Caco-2 (cell line): ENCODE measurements at regions of chr3 and their contacts with region 1.

Region 1: GRCh38 chr3:195909644-195910508 is 1.5 kb upstream of the TNK2 start:
- DNase-seq: peak; percentile 86 to 88
- H3K4me3 ChIP-seq: peak overlapping the region; percentile 74
- H3K4me3 Mint-ChIP-seq: peak overlapping the region; percentile 86
- H3K27ac Mint-ChIP-seq: no peak overlapping the region
- H3K4me1 ChIP-seq: peaks cover 30% of the 10 kb centered on the region
- H3K4me1 Mint-ChIP-seq: peaks cover 30% of the 10 kb centered on the region
- H3K27me3 ChIP-seq: no peaks in the 10 kb centered on the region
- H3K27me3 Mint-ChIP-seq: no peaks in the 10 kb centered on the region
- CTCF ChIP-seq: no peak

Region 2: GRCh38 chr3:195863121-195864006 is 46.5 kb before region 1 on chr3:
- CTCF ChIA-PET with region 1: interaction called, 17 read pairs
- POLR2A ChIA-PET with region 1: interaction called, 3 read pairs
- intact Hi-C with region 1: loop called (anchors 1 kb)
- DNase-seq: peak; percentile 72 to 80
- H3K4me3 ChIP-seq: no peak overlapping the region
- H3K4me3 Mint-ChIP-seq: no peak overlapping the region
- H3K27ac Mint-ChIP-seq: no peak overlapping the region
- H3K4me1 ChIP-seq: no peaks in the 10 kb centered on the region; the same call in 1 of the 2 replicates
- H3K4me1 Mint-ChIP-seq: peaks cover 6% of the 10 kb centered on the region
- H3K27me3 ChIP-seq: no peaks in the 10 kb centered on the region
- H3K27me3 Mint-ChIP-seq: no peaks in the 10 kb centered on the region
- CTCF ChIP-seq: peak; percentile 66 to 84

Region 3: GRCh38 chr3:195956571-195956970 is 46.7 kb after region 1 on chr3:
- CTCF ChIA-PET with region 1: no interaction called
- POLR2A ChIA-PET with region 1: no interaction called
- intact Hi-C with region 1: loop called (anchors 2 kb)
- DNase-seq: no peak
- H3K4me3 ChIP-seq: no peak overlapping the region
- H3K4me3 Mint-ChIP-seq: no peak overlapping the region
- H3K27ac Mint-ChIP-seq: no peak overlapping the region
- H3K4me1 ChIP-seq: no peaks in the 10 kb centered on the region
- H3K4me1 Mint-ChIP-seq: peaks cover 6% of the 10 kb centered on the region
- H3K27me3 ChIP-seq: no peaks in the 10 kb centered on the region
- H3K27me3 Mint-ChIP-seq: no peaks in the 10 kb centered on the region
- CTCF ChIP-seq: no peak